Gastrocnemius medialis (tissue), 4 donors: ENCODE measurements at regions of chr12 and their contacts with region 1.

Region 1: DNA sequence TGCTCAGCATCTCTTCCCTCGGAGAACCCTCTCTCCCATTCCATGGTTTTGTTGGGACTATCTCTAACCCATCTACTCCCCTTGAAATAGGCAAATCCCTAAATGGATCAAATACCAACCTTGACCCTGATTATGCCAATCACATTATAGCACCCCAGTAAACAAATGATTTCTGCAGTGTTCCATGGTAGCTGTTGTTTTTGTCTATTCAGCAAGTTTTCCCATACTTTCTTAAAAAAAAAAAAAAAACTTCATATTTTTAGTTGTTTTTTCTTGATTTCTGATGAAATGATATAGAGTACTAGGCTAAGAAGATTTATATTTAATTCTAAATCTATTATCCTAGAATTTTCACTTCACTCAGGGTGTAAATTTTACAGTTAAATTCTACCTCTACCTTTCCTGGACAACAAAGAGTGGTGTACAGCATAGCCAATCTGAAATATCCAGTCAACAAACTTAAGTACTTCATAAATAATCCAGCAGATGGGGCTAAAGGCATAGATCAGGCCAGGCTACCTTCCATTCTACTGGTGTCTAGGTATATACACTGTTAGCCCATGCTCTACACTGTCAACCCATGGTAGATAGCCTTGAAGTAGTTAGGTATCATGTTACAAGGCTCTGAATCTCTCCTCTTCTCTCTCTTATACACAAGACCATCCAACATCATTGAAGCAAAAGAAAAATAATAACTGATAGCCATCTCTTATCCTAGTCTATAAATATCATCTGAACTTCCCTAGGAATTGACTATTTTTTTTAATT is 82.2 kb downstream of the PLEKHG7 start:
- DNase-seq: peak in 1 of 2 donors; percentile 8
- ATAC-seq: peak; percentile 95 to 98
- H3K4me3 ChIP-seq: no peak overlapping the region
- H3K27ac ChIP-seq: peak overlapping the region; percentile 25 to 51 (median 32)
- H3K4me1 ChIP-seq: peaks cover 20 to 29% of the 10 kb centered on the region in 2 donors
- H3K27me3 ChIP-seq: no peaks in the 10 kb centered on the region
- CTCF ChIP-seq: peak; percentile 43 to 69 (median 67)
- POLR2A ChIP-seq: no peak

Region 2: DNA sequence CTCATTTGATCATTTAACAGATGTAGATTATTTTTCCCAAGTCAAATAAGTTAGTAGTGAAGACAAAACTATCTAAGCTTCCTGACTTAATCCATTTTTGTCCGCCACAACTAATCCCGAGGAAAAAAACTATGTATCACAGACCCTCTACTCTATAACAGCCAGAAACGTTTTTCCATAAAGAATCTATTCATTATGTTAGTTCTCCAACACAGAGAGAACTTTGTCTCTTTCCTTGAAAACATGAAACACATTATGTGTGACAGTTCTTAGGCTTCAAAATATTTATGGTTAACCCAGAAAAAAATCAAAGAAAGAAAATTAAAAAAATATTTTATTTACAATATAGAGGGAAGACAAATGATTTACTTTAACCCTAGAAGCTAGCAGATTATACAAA is 17.9 kb after region 1 on chr12:
- in situ Hi-C with region 1: no loop called
- intact Hi-C with region 1: no loop called
- DNase-seq: no peak
- ATAC-seq: no peak
- H3K4me3 ChIP-seq: no peak overlapping the region
- H3K27ac ChIP-seq: no peak overlapping the region
- H3K4me1 ChIP-seq: peaks cover 7% of the 10 kb centered on the region in 2 donors
- H3K27me3 ChIP-seq: no peaks in the 10 kb centered on the region
- CTCF ChIP-seq: no peak
- POLR2A ChIP-seq: no peak

Region 3: DNA sequence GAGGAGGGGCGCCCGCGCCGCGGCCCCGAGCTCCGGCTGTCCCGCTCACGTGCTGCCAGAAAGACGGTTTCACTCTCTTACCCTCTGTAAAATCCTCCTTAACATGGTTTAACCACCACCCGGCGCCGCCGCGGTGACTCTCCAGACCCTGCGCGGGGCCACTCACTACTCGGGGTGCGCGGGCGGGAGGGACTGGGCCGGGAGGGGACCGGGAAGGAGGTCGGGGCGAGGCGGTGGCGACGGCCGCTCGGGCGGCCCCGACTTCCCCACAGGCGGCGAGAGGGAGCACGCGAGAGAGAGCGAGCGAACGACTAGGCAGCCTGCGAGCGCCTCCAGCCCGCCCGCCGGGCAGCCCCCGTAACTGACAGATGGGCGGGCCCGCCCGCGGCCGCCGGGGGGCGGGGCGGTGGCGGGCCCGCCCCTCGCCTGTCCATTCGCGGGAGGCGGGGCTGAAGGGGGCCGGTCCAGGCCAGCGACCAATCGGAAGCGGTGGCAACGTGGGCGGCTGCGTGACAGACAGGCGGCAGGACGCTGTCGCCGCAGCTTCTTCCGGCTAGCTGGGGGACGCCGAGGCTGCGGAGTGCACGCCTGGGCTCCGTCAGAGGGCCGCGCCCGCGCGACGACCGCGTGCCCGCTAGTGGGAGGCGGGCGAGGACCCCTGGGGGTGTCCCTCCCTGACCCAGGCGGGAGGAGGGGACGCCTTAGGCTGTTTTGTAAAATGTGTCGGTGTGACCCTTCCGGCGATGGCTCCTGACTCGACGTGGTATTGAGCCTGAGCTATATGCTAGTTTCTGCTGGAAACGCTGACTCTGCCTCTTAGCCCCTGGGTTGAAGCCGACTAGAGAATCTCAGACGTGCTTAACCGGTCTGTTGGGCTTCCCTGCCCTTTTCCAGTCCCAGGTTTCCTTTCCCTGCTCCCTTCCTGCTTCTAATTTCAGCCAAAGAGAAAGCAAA is 144.3 kb after region 1 on chr12 and contains the start of gene EEA1:
- in situ Hi-C with region 1: loop called in 1 of 4 experiments (anchors 25 kb)
- intact Hi-C with region 1: loop called (anchors 5 kb)
- DNase-seq: peak; percentile 96 to 97
- ATAC-seq: peak; percentile 83 to 84
- H3K4me3 ChIP-seq: peak within 1 kb of the TSS; percentile 69 to 92 (median 86)
- H3K27ac ChIP-seq: peak within 1 kb of the TSS; percentile 94 to 100 (median 99)
- H3K4me1 ChIP-seq: peaks cover 39 to 41% of the 10 kb centered on the region in 2 donors
- H3K27me3 ChIP-seq: no peaks in the 10 kb centered on the region
- CTCF ChIP-seq: peak in 4 of 5 experiments; percentile 11 to 45 (median 40)
- POLR2A ChIP-seq: peak; percentile 94 to 97
- total RNA-seq, gene EEA1: 18.6 to 28.7 (median 20.8) TPM

Region 4: GRCh38 chr12:93390549-93391297 is 605.7 kb after region 1 on chr12:
- in situ Hi-C with region 1: loop called in 3 of 4 experiments (anchors 10 kb)
- intact Hi-C with region 1: no loop called
- DNase-seq: no peak
- ATAC-seq: no peak
- H3K4me3 ChIP-seq: no peak overlapping the region
- H3K27ac ChIP-seq: peak overlapping the region in 3 of 4 donors; percentile 35 to 51 (median 43)
- H3K4me1 ChIP-seq: peaks cover 11 to 25% of the 10 kb centered on the region in 2 donors
- H3K27me3 ChIP-seq: no peaks in the 10 kb centered on the region
- CTCF ChIP-seq: no peak
- POLR2A ChIP-seq: no peak